ENCODE measurements at regions of chr7 and their contacts with region 1.

Region 1: GRCh38 chr7:26376175-26376917 is 84.7 kb downstream of the SNX10 start:
- DNase-seq: no peak
- ATAC-seq: peak in 1 of 2 donors; percentile 36
- H3K4me3 ChIP-seq: peak overlapping the region; percentile 31 to 50 (median 42)
- H3K27ac ChIP-seq: no peak overlapping the region
- H3K4me1 ChIP-seq: peaks cover 3 to 6% of the 10 kb centered on the region in 2 donors
- H3K27me3 ChIP-seq: peaks cover 81 to 84% (median 81%) of the 10 kb centered on the region in 3 donors
- CTCF ChIP-seq: no peak
- POLR2A ChIP-seq: no peak

Region 2: DNA sequence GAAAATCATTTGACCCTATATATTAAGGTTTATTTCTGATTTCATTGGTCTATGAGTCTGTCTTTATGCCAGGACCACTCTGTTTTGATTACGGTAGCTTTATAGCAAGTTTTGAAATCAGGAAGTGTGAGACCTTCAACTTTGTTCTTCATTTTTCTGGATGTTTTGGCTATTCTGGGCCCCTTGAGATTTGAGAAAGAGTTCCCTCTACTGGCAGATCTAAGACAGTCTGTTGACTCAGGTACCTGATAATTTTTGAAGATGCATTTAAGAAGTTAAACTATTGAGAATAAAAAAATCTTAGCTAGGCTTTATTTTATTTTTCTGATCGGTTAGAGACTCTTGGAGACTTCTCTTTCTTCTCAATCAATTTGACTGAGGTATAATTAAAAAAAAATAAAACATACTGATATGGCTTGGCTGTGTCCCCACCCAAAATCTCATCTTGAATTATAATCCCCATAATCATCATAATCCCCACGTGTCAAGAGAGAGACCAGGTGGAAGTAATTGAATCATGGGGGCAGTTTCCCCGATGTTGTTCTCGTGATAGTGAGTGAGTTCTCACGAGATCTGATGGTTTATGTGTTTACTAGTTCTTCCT is 124.5 kb after region 1 on chr7:
- in situ Hi-C with region 1: no loop called
- intact Hi-C with region 1: loop called (anchors 2 kb)
- DNase-seq: no peak
- ATAC-seq: no peak
- H3K4me3 ChIP-seq: no peak overlapping the region
- H3K27ac ChIP-seq: no peak overlapping the region
- H3K4me1 ChIP-seq: no peaks in the 10 kb centered on the region
- H3K27me3 ChIP-seq: no peaks in the 10 kb centered on the region
- CTCF ChIP-seq: peak in 3 of 5 experiments; percentile 17 to 29 (median 24)
- POLR2A ChIP-seq: no peak

Region 3: GRCh38 chr7:27150568-27151340 is 774.4 kb after region 1 on chr7:
- in situ Hi-C with region 1: loop called in 1 of 4 experiments (anchors 10 kb)
- intact Hi-C with region 1: no loop called
- DNase-seq: peak; percentile 66 to 78
- ATAC-seq: peak; percentile 65 to 69
- H3K4me3 ChIP-seq: peak overlapping the region; percentile 64 to 75 (median 70)
- H3K27ac ChIP-seq: peak overlapping the region; percentile 90 to 96 (median 94)
- H3K4me1 ChIP-seq: peaks cover 56 to 70% of the 10 kb centered on the region in 2 donors
- H3K27me3 ChIP-seq: no peaks in the 10 kb centered on the region
- CTCF ChIP-seq: peak; percentile 86 to 92 (median 89)
- POLR2A ChIP-seq: peak; percentile 84 to 87